Sigmoid colon (tissue), 7 donors: ENCODE measurements at regions of chr1 and their contacts with region 1.

Region 1: DNA sequence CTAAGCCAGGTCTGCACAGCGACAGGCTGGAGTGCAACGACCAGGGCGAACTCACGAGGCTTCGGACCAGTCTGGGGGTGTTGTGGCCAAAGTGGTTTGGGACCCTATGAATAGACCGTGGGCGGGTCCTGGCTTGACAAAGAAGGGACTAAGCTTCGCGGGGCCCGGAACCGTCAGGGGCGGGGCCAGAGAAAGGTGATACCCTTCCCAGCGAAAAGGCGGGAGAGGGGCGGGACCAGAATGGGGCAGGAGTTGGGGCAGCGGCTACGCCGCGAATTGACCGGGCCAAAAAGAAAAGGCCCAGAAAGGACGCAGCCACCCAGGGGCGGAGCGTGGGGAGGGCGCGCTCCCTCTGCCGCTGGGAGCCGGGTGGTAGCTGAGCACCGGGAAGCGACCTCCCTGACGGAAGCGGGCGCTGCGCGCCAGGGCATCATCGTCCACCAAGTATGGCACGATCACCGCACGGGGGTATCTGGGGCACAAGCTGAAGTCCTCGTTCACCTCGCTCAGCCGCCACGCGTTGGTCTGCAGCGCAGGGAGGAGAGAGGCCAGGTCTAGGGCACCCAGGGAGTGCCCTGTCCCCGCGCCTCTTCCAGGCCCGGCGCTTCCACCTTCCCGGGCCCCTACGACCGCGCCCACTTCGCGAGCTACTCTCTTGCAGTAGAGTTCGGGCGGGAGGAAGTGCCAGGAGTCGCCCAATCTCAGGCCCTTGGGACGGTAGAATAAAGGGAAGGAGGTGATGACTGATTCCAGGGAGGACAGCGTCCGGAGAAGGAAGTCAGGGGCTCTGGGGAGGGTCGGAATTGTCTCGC is 6.7 kb upstream of the FAM167B start:
- DNase-seq: peak; percentile 91
- H3K4me3 ChIP-seq: peak overlapping the region; percentile 57 to 64 (median 63)
- H3K27ac ChIP-seq: peak overlapping the region; percentile 75 to 91 (median 80)
- H3K4me1 ChIP-seq: peaks cover 0 to 32% (median 18%) of the 10 kb centered on the region in 4 donors
- H3K27me3 ChIP-seq: no peaks in the 10 kb centered on the region
- CTCF ChIP-seq: peak in 2 of 4 experiments; percentile 9 to 24
- EP300 ChIP-seq: no peak
- POLR2A ChIP-seq: peak in 1 of 2 donors; percentile 15

Region 2: DNA sequence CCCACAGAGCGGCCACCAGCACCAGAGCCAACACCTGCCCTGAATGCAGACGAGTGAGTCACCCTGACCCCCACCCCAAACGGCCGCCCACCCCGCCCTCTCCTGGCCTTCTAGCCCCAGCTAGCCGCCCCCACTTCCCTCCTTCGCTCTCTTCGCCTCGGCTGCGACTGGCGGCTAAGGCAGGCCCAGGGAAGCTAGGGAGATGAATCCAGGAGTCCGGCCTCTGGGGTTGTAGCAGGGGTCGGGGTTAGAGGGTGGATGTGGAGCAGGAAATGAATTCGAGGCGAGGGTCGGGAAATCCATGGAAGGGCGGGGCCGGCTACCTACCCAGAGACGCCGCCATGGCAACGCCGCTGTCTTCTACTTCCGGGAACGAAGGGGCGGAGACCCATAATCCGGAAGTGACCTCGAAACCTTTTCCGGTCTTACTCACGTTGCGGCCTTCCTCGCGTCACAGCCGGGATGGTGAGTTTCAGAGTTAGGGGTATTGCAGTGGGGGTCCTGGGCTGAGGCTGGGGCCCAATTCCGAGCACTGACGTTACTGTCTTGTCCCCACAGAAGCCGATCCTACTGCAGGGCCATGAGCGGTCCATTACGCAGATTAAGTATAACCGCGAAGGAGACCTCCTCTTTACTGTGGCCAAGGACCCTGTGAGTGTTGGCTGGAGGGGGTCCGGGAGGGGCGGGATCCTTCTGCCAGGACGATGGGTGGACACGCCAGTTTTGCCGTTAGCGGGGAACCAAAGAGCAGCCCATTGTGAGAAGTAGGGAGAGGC is 18.2 kb before region 1 on chr1 and contains the starts of genes EIF3I and TMEM234:
- intact Hi-C with region 1: loop called (anchors 1 kb)
- DNase-seq: peak; percentile 97
- H3K4me3 ChIP-seq: peak within 1 kb of the TSS; percentile 70 to 87 (median 73)
- H3K27ac ChIP-seq: peak within 1 kb of the TSS; percentile 88 to 91 (median 90)
- H3K4me1 ChIP-seq: peaks cover 0 to 32% (median 26%) of the 10 kb centered on the region in 4 donors
- H3K27me3 ChIP-seq: no peaks in the 10 kb centered on the region
- CTCF ChIP-seq: no peak
- EP300 ChIP-seq: peak in 1 of 4 donors; percentile 53
- POLR2A ChIP-seq: peak; percentile 61 to 71
- total RNA-seq, gene EIF3I: 163 to 178 (median 171) TPM
- total RNA-seq, gene TMEM234: 6.4 to 20.8 (median 10.1) TPM

Region 3: GRCh38 chr1:32291708-32292492 is 51.6 kb after region 1 on chr1 and contains the start of gene HDAC1:
- intact Hi-C with region 1: loop called (anchors 1 kb)
- DNase-seq: peak; percentile 98
- H3K4me3 ChIP-seq: peak within 1 kb of the TSS; percentile 69 to 92 (median 86)
- H3K27ac ChIP-seq: peak within 1 kb of the TSS; percentile 79 to 88 (median 85)
- H3K4me1 ChIP-seq: peaks cover 0 to 13% (median 9%) of the 10 kb centered on the region in 4 donors
- H3K27me3 ChIP-seq: no peaks in the 10 kb centered on the region
- CTCF ChIP-seq: no peak
- EP300 ChIP-seq: peak in 1 of 4 donors; percentile 7
- POLR2A ChIP-seq: peak; percentile 20 to 37
- total RNA-seq, gene HDAC1: 47.1 to 68.0 (median 55.6) TPM